ENCODE measurements at regions of chr9 and their contacts with region 1.

Region 1: GRCh38 chr9:125746017-125746773 is 978 bp upstream of the PBX3 start:
- DNase-seq: peak; percentile 95 to 96
- ATAC-seq: peak; percentile 94 to 98 (median 96)
- H3K4me3 ChIP-seq: peak overlapping the region; percentile 54 to 90 (median 77)
- H3K27ac ChIP-seq: peak overlapping the region; percentile 65 to 94 (median 85)
- H3K4me1 ChIP-seq: peaks cover 0 to 36% (median 27%) of the 10 kb centered on the region in 9 donors
- H3K27me3 ChIP-seq: no peaks in the 10 kb centered on the region
- CTCF ChIP-seq: no peak

Region 2: DNA sequence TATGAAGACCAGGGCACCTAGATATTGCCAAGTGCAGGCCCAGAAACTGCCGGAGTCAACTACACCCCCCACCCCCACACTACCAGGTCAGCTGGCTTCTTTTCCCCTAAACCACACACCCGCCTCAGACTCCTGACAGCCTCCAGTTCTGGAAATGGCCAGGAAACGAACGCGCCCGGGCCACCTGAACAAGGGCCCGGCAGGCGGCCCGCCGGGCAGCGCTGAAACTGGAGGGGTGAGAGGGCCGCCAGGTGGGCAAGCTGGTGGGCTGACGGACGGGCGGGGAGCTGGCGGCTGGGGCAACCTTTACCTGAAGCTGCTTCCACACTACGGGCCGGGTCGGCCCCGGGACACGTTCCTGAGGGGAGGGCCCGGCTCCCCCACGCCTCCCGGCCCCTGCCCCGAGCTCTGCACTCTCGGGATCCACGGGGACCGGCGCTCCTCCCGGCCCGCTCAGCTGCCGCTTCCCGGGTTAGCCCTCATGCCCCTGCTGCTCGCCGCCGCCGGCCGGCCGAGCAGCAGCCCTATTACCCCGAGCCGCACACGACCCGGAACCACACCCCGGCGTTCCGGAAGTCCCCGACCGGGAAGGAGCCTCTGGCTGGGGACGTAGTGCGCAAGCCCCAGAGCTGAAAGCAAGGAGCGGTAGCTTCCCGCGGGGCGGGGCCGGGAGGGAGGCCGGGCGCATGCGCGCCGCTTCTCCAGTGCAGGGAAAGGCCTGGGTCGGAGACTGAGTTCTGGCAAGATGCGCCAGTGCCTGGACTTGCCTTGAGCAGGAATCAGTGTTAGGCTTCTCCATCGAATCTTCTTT is 39.3 kb before region 1 on chr9 and contains the start of gene MAPKAP1:
- intact Hi-C with region 1: loop called in 2 of 10 experiments (anchors 5 kb)
- DNase-seq: peak; percentile 97 to 99
- ATAC-seq: peak; percentile 100
- H3K4me3 ChIP-seq: peak within 1 kb of the TSS; percentile 86 to 100 (median 93)
- H3K27ac ChIP-seq: peak within 1 kb of the TSS; percentile 27 to 96 (median 79)
- H3K4me1 ChIP-seq: peaks cover 5 to 33% (median 18%) of the 10 kb centered on the region in 9 donors
- H3K27me3 ChIP-seq: no peaks in the 10 kb centered on the region
- CTCF ChIP-seq: peak in 1 of 9 donors; percentile 3
- total RNA-seq, gene MAPKAP1: 102 to 143 (median 116) TPM

Region 3: DNA sequence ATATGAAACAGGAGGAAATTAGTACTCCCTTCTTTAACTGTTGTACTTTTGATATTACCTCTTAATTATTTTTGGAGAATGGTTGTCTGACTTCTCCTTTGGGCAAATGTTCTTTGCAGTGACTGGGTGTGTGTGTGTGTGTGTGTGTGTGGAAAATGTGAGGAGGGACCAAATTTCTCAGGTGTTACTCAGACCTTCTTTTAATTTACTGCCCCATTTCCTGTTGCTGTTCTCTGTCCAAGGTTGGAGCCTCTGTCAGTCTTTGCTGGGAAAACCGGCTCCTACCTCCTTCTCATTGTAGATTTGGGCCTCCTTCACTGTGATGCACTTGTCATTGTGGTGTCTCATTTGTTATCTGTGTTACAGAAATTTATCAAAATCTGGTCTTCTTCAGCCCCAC is 69.4 kb after region 1 on chr9:
- intact Hi-C with region 1: loop called in 4 of 10 experiments (anchors 2 to 10 kb)
- DNase-seq: no peak
- ATAC-seq: no peak
- H3K4me3 ChIP-seq: no peak overlapping the region
- H3K27ac ChIP-seq: no peak overlapping the region
- H3K4me1 ChIP-seq: peaks cover 0 to 11% (median 5%) of the 10 kb centered on the region in 9 donors
- H3K27me3 ChIP-seq: no peaks in the 10 kb centered on the region
- CTCF ChIP-seq: no peak

Measured in heart right ventricle (tissue), 16 donors.